Uterus (tissue), 4 donors: ENCODE measurements at regions of chr6 and their contacts with region 1.

Region 1: DNA sequence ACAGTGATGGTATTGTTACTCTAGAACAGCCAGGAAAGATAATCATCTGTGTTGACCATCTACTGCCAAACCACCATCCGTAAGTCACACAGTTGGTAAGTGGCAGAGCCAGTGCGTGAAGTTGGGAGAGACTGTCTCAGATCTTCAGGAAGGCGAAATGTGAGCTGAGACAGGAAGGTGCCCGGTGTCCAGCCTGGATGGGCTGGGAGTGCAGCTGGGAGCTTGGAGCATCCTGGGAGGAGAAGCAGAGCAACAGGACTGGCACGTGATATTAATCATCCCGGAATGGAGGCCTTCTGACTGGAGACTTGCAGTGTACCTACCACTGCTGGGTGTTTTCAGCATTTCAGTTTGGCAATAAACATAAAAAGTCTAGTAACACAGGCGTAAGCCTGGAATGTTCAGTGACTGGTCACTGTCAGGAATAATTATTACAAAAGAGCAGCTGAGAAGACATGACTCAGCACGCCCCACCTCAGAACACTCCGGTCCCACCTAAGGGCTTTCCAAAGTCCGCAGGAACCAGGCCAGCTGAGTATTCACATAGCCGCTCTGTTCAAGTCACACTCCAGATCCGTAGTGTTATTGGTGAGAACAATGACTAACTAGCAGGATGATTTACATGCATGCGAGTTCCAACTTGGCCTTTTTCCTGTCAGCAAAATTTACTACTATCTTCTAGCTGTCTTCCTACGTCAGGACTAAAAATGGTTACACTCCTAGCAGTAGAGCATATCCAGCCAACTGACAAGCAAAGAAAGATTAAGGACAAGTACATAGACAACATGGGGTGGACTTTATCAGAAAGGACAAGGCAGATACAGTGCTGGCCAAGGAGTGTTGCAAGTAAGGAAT is 45.1 kb upstream of the PNRC1 start:
- DNase-seq: peak; percentile 96 to 98
- H3K4me3 ChIP-seq: peak overlapping the region in 1 of 2 donors; percentile 5
- H3K27ac ChIP-seq: peak overlapping the region; percentile 86 to 87
- H3K4me1 ChIP-seq: peaks cover 5 to 8% of the 10 kb centered on the region in 2 donors
- H3K27me3 ChIP-seq: no peaks in the 10 kb centered on the region
- CTCF ChIP-seq: no peak
- POLR2A ChIP-seq: peak in 1 of 2 donors; percentile 20

Region 2: GRCh38 chr6:89080542-89081422 is 45.3 kb after region 1 on chr6 and contains the start of gene PNRC1:
- intact Hi-C with region 1: loop called (anchors 5 kb)
- DNase-seq: peak; percentile 100
- H3K4me3 ChIP-seq: peak within 1 kb of the TSS; percentile 93 to 100
- H3K27ac ChIP-seq: peak within 1 kb of the TSS; percentile 100
- H3K4me1 ChIP-seq: no peaks in the 10 kb centered on the region
- H3K27me3 ChIP-seq: no peaks in the 10 kb centered on the region
- CTCF ChIP-seq: no peak
- POLR2A ChIP-seq: peak; percentile 100
- total RNA-seq, gene PNRC1: 114 to 340 (median 203) TPM